MCF 10A (cell line): ENCODE measurements at regions of chr12 and their contacts with region 1.

Region 1: DNA sequence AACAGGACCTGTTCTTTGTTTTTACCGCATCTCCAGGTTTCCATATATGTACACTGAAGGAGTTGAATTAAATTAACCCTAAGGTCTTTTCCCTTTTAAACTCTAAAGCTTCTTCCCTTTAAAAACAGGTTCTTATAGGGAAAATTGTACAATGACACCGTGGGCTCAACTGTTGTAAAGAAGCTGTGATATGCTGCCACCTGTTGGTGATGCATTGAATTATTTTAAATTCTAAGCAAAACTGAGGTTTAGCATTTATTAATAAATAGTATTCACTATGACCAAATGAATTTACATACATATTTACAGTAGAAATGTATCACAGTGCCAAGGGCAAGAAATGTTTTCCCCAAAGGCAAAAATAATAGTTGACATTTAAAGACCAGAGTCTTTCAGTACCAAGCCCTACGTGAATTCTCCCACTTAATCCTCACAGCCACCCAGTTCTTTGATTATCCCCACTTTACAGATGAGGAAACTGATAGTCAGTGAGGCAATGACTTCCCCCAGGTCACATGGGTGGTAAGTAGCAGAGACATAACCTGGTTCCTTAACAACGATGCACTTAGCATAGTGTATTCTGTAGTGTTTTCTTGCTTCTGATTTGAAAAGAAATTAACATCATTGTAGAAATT is 35.7 kb upstream of the TMEM263 start:
- DNase-seq: peak; percentile 57
- H3K4me3 Mint-ChIP-seq: no peak overlapping the region
- H3K27ac Mint-ChIP-seq: no peak overlapping the region
- H3K4me1 Mint-ChIP-seq: no peaks in the 10 kb centered on the region
- H3K27me3 Mint-ChIP-seq: peaks cover 12% of the 10 kb centered on the region
- CTCF ChIP-seq: peak; percentile 59

Region 2: GRCh38 chr12:106386813-106387535 is 533.1 kb before region 1 on chr12:
- CTCF ChIA-PET with region 1: interaction called, 58 read pairs
- POLR2A ChIA-PET with region 1: no interaction called
- intact Hi-C with region 1: loop called (anchors 1 kb)
- DNase-seq: no peak
- H3K4me3 Mint-ChIP-seq: no peak overlapping the region
- H3K27ac Mint-ChIP-seq: no peak overlapping the region
- H3K4me1 Mint-ChIP-seq: no peaks in the 10 kb centered on the region
- H3K27me3 Mint-ChIP-seq: no peaks in the 10 kb centered on the region
- CTCF ChIP-seq: no peak

Region 3: GRCh38 chr12:106493531-106493930 is 426.5 kb before region 1 on chr12:
- CTCF ChIA-PET with region 1: interaction called, 3 read pairs
- POLR2A ChIA-PET with region 1: no interaction called
- intact Hi-C with region 1: loop called (anchors 10 kb)
- DNase-seq: no peak
- H3K4me3 Mint-ChIP-seq: no peak overlapping the region
- H3K27ac Mint-ChIP-seq: no peak overlapping the region
- H3K4me1 Mint-ChIP-seq: no peaks in the 10 kb centered on the region
- H3K27me3 Mint-ChIP-seq: no peaks in the 10 kb centered on the region
- CTCF ChIP-seq: no peak

Region 4: GRCh38 chr12:106841510-106842302 is 78.3 kb before region 1 on chr12:
- CTCF ChIA-PET with region 1: interaction called, 17 read pairs
- POLR2A ChIA-PET with region 1: no interaction called
- intact Hi-C with region 1: loop called (anchors 2 kb)
- DNase-seq: peak; percentile 58
- H3K4me3 Mint-ChIP-seq: no peak overlapping the region
- H3K27ac Mint-ChIP-seq: no peak overlapping the region
- H3K4me1 Mint-ChIP-seq: no peaks in the 10 kb centered on the region
- H3K27me3 Mint-ChIP-seq: no peaks in the 10 kb centered on the region
- CTCF ChIP-seq: peak; percentile 57

Region 5: GRCh38 chr12:106903241-106903945 is 16.6 kb before region 1 on chr12:
- CTCF ChIA-PET with region 1: interaction called, 17 read pairs
- POLR2A ChIA-PET with region 1: interaction called, 4 read pairs
- intact Hi-C with region 1: no loop called
- DNase-seq: peak; percentile 70
- H3K4me3 Mint-ChIP-seq: peak overlapping the region; percentile 7
- H3K27ac Mint-ChIP-seq: no peak overlapping the region
- H3K4me1 Mint-ChIP-seq: no peaks in the 10 kb centered on the region
- H3K27me3 Mint-ChIP-seq: no peaks in the 10 kb centered on the region
- CTCF ChIP-seq: no peak

Region 6: GRCh38 chr12:106971065-106971464 is 51.0 kb after region 1 on chr12:
- CTCF ChIA-PET with region 1: no interaction called
- POLR2A ChIA-PET with region 1: no interaction called
- intact Hi-C with region 1: no loop called
- DNase-seq: no peak
- H3K4me3 Mint-ChIP-seq: no peak overlapping the region
- H3K27ac Mint-ChIP-seq: no peak overlapping the region
- H3K4me1 Mint-ChIP-seq: peaks cover 8% of the 10 kb centered on the region
- H3K27me3 Mint-ChIP-seq: no peaks in the 10 kb centered on the region
- CTCF ChIP-seq: no peak

Region 7: DNA sequence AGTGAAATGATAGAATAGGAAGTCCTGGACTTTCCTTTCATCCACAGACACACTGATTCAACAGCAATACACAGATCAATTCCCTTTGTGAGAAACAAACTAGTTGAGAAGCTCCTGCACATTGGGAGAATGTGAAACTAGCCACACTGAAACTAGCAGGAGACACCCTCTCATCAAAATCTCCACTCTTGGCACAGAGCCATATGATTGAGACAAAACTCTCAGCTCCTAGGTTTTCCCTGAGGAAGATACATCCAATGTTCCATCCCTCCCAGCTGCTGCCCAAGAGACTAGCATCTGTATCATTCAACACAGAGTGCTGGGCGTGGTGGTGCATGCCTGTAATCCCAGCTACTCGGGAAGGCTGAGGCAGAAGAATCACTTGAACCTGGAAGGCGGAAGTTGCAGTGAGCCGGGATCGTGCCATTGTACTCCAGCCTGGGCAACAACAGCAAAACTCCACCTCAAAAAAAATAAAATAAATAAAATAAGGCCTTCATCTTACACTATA is 118.7 kb after region 1 on chr12:
- CTCF ChIA-PET with region 1: no interaction called
- POLR2A ChIA-PET with region 1: no interaction called
- intact Hi-C with region 1: no loop called
- DNase-seq: no peak
- H3K4me3 Mint-ChIP-seq: no peak overlapping the region
- H3K27ac Mint-ChIP-seq: no peak overlapping the region
- H3K4me1 Mint-ChIP-seq: peaks cover 5% of the 10 kb centered on the region
- H3K27me3 Mint-ChIP-seq: no peaks in the 10 kb centered on the region
- CTCF ChIP-seq: no peak